Naive thymus-derived CD4-positive, alpha-beta T cell (primary cell): ENCODE measurements at regions of chr6 and their contacts with region 1.

Region 1: GRCh38 chr6:125944434-125944816 is 12.1 kb upstream of the HINT3 start:
- DNase-seq: no peak
- ATAC-seq: no peak
- H3K4me3 ChIP-seq: no peak overlapping the region
- H3K4me3 Mint-ChIP-seq: no peak overlapping the region
- H3K27ac ChIP-seq: no peak overlapping the region
- H3K27ac Mint-ChIP-seq: no peak overlapping the region
- H3K4me1 ChIP-seq: no peaks in the 10 kb centered on the region
- H3K4me1 Mint-ChIP-seq: peaks cover 0 to 10% (median 0%) of the 10 kb centered on the region in 7 donors
- H3K27me3 ChIP-seq: no peaks in the 10 kb centered on the region
- H3K27me3 Mint-ChIP-seq: peaks cover 0 to 8% (median 6%) of the 10 kb centered on the region in 5 donors

Region 2: DNA sequence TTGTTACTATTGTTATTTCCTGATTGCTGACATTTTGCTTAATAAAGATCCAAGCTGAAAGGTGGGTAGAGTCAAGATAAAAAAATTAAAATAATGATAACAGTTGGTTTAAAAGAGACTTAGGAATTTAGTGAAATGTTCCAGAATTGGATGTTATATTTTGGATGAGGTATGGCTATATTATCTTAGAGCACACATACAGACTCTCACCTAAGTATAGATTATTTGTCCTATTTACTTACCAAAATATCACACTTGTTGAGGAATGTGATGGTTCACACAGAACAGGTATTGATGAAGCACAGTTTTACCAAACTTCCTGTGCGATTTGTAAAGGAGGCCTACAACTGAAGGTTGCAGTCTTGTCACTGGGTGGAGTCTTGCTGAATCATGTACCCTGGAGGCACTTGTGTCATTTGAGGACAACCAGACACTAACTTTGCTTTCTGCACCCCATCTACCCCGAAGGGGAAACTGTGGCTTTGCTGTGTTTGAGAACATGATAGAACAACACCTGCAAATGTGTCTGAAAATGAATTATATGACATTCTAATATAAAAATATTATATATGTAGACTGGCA is 20.3 kb before region 1 on chr6:
- CTCF ChIA-PET with region 1: no interaction called
- POLR2A ChIA-PET with region 1: interaction called, 5 read pairs
- intact Hi-C with region 1: loop called in 1 of 2 experiments (anchors 2 kb)
- DNase-seq: no peak
- ATAC-seq: no peak
- H3K4me3 ChIP-seq: no peak overlapping the region
- H3K4me3 Mint-ChIP-seq: peak overlapping the region in 1 of 10 donors; percentile 54
- H3K27ac ChIP-seq: no peak overlapping the region
- H3K27ac Mint-ChIP-seq: peak overlapping the region in 2 of 9 donors; percentile 55 to 60
- H3K4me1 ChIP-seq: peaks cover 4 to 5% of the 10 kb centered on the region in 2 donors
- H3K4me1 Mint-ChIP-seq: peaks cover 3 to 65% (median 4%) of the 10 kb centered on the region in 7 donors
- H3K27me3 ChIP-seq: no peaks in the 10 kb centered on the region
- H3K27me3 Mint-ChIP-seq: no peaks in the 10 kb centered on the region

Region 3: GRCh38 chr6:126091507-126091906 is 147.1 kb after region 1 on chr6:
- CTCF ChIA-PET with region 1: no interaction called
- POLR2A ChIA-PET with region 1: no interaction called
- intact Hi-C with region 1: no loop called
- DNase-seq: no peak
- ATAC-seq: no peak
- H3K4me3 ChIP-seq: no peak overlapping the region
- H3K4me3 Mint-ChIP-seq: no peak overlapping the region
- H3K27ac ChIP-seq: no peak overlapping the region
- H3K27ac Mint-ChIP-seq: no peak overlapping the region
- H3K4me1 ChIP-seq: no peaks in the 10 kb centered on the region
- H3K4me1 Mint-ChIP-seq: peaks cover 0 to 3% (median 2%) of the 10 kb centered on the region in 7 donors
- H3K27me3 ChIP-seq: no peaks in the 10 kb centered on the region
- H3K27me3 Mint-ChIP-seq: no peaks in the 10 kb centered on the region